Right ventricle myocardium inferior (tissue), 1 donor: ENCODE measurements at regions of chr11 and their contacts with region 1.

Region 1: GRCh38 chr11:64846998-64847666 is 2.7 kb upstream of the CDC42BPG start:
- DNase-seq: peak; percentile 95
- ATAC-seq: peak; percentile 91

Region 2: DNA sequence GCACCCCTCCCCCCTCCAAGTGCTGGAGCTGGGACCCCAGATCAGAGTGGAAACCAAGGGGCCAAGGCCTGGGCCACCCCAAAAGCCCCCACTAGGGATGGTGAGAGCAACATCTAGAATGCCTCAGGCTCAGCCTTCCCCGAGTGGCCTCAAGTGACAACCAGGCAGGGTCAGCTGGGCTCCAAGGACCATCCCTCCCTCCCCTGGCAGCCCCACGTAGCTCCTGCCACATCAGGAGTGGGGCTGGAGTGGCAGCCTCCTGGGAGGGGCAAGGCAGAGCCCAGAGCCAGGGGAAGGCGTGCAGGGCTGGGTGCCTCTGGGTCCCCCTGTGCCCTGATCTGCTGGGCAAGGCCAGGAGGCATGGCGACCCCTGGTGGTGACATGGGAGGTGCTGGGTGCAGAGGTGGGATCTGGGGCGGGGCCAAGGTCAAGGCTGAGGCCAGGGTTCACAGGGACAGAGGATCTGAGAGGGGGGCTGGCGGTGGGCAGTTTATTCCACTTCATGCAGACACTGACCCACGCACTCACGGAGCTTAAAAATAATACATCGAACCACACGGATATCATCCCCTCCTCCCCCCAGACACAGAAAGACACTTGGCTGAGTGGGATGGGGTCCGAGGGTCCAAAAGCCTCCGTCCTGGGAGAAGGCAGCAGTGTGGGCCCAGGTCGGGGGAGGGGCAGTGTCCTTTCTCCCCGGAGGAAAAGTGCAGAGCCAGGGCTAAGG is 47.1 kb after region 1 on chr11:
- intact Hi-C with region 1: loop called (anchors 1 kb)
- DNase-seq: peak; percentile 94
- ATAC-seq: peak; percentile 86